ENCODE measurements at regions of chr3 and their contacts with region 1.

Region 1: DNA sequence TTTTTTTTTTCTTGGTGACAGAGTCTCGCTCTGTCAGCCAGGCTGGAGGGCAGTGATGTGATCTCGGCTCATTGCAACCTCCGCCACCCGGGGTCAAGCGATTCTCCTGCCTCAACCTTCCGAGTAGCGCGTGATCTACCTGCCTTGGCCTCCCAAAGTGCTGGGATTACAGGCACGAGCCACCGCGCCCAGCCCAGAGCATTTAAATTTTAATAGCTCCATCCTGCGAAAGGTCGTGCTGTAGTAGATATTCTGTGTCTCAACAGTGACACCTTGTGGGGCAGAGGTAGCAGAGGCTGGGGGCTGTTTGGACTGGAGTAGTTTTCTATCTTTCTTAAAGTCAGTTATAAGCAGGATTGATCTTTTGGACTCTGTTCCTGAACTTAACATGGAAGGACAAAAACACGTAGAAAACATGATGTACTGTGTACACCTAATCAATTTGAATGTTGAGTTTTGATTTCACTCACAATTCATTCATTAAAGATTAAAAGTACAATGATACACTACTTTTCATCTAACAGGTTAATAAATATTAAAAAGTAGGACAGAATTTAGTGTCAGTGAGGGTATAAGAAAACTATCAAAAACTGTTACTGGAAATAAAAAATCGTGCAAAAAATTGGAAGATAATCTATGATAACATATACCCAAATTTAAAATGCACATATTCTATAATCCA is 11.0 kb upstream of the PDCD6IP start:
- DNase-seq: peak; percentile 69
- H3K4me3 Mint-ChIP-seq: peak overlapping the region; percentile 28
- H3K27ac Mint-ChIP-seq: no peak overlapping the region
- H3K4me1 Mint-ChIP-seq: no peaks in the 10 kb centered on the region
- H3K27me3 Mint-ChIP-seq: peaks cover 5% of the 10 kb centered on the region

Region 2: GRCh38 chr3:33131331-33132018 is 656.0 kb before region 1 on chr3:
- CTCF ChIA-PET with region 1: interaction called, 40 read pairs
- POLR2A ChIA-PET with region 1: no interaction called
- intact Hi-C with region 1: loop called (anchors 1 kb)
- DNase-seq: peak; percentile 32
- H3K4me3 Mint-ChIP-seq: no peak overlapping the region
- H3K27ac Mint-ChIP-seq: no peak overlapping the region
- H3K4me1 Mint-ChIP-seq: peaks cover 9% of the 10 kb centered on the region
- H3K27me3 Mint-ChIP-seq: no peaks in the 10 kb centered on the region

Region 3: GRCh38 chr3:33377926-33378325 is 409.5 kb before region 1 on chr3:
- CTCF ChIA-PET with region 1: interaction called, 17 read pairs
- POLR2A ChIA-PET with region 1: no interaction called
- intact Hi-C with region 1: loop called (anchors 5 kb)
- DNase-seq: no peak
- H3K4me3 Mint-ChIP-seq: no peak overlapping the region
- H3K27ac Mint-ChIP-seq: no peak overlapping the region
- H3K4me1 Mint-ChIP-seq: peaks cover 3% of the 10 kb centered on the region
- H3K27me3 Mint-ChIP-seq: no peaks in the 10 kb centered on the region

Region 4: DNA sequence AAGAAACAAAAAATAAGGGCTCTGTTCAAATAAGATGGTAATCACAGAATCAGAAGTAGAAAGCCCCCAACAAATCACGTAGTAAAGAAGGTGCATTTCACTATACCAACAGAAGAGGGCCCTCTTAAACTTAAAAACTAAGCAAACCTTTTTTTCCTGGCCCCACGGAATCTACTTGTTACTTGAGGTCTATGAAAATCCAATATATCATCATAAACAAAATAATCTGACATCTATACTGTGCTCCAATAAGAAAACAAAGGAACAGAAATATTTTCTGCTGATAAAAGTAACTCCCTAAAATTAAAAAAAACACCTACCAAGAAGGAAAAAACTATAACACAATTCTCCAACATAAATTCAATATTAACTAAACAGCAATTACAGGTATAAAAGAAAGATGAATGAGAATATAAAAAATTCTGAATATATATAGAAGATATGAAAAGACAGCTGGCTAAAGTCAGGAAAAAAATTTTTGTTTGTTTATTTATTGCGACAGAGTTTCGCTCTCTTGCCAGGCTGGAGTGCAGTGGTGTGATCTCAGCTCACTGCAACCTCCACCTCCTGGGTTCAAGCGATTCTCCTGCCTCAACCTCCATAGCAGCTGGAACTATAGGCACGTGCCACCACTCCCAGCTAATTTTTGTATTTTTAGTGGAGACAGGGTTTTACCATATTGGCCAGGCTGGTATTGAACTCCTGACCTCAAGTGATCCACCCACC is 151.2 kb before region 1 on chr3:
- CTCF ChIA-PET with region 1: interaction called, 53 read pairs
- POLR2A ChIA-PET with region 1: no interaction called
- intact Hi-C with region 1: loop called (anchors 1 kb)
- DNase-seq: no peak
- H3K4me3 Mint-ChIP-seq: no peak overlapping the region
- H3K27ac Mint-ChIP-seq: no peak overlapping the region
- H3K4me1 Mint-ChIP-seq: no peaks in the 10 kb centered on the region
- H3K27me3 Mint-ChIP-seq: no peaks in the 10 kb centered on the region

Region 5: DNA sequence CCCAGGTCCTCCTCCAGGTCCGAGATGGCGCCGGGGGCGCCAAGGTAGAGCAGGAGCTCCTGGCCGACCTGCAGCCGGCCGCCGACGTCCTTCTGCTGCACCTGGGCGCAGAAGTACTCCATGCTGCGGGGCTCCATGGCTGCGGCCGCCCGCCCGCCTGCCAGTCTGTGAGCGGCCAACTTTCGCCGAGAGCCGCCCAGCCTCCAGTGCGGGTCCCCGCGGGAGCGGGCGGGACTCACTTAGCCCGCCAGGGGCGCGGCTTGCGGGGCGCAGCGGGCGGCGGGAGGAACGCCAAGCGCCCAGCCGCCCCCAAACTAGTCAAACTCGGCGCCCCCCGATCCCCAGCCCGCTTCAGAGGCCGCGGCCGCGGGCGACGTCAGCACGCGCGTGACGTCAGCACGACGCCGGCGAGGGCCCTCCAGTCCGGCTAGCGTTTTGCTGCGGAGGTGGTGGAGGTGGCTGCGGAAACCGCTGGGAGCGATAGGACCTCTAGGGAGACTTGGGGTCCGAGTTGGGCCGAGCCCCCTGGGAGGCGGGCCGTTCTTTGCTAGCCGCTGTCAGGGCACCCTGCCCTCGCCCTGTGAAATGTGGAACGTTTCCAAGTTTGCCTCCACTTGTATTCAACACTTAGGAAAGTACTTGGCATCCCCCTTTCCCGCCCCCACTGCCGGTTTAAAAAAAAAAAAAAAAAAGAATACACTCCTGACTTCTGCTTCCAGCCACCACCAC is 69.4 kb before region 1 on chr3 and contains the start of gene CLASP2:
- CTCF ChIA-PET with region 1: interaction called, 3 read pairs
- POLR2A ChIA-PET with region 1: no interaction called
- intact Hi-C with region 1: loop called (anchors 2 kb)
- DNase-seq: peak; percentile 89
- H3K4me3 Mint-ChIP-seq: peak within 1 kb of the TSS; percentile 85
- H3K27ac Mint-ChIP-seq: peak within 1 kb of the TSS; percentile 90
- H3K4me1 Mint-ChIP-seq: peaks cover 9% of the 10 kb centered on the region
- H3K27me3 Mint-ChIP-seq: no peaks in the 10 kb centered on the region
- total RNA-seq, gene CLASP2: 41.8 to 46.6 TPM

Region 6: GRCh38 chr3:33798411-33799201 is 11.1 kb after region 1 on chr3 and contains the start of gene PDCD6IP:
- CTCF ChIA-PET with region 1: interaction called, 28 read pairs
- POLR2A ChIA-PET with region 1: no interaction called
- intact Hi-C with region 1: no loop called
- DNase-seq: peak; percentile 94
- H3K4me3 Mint-ChIP-seq: peak within 1 kb of the TSS; percentile 95
- H3K27ac Mint-ChIP-seq: peak within 1 kb of the TSS; percentile 89
- H3K4me1 Mint-ChIP-seq: peaks cover 56% of the 10 kb centered on the region
- H3K27me3 Mint-ChIP-seq: no peaks in the 10 kb centered on the region
- total RNA-seq, gene PDCD6IP: 163 to 168 TPM